CD4-positive, alpha-beta memory T cell (primary cell): ENCODE measurements at regions of chr2 and their contacts with region 1.

Region 1: DNA sequence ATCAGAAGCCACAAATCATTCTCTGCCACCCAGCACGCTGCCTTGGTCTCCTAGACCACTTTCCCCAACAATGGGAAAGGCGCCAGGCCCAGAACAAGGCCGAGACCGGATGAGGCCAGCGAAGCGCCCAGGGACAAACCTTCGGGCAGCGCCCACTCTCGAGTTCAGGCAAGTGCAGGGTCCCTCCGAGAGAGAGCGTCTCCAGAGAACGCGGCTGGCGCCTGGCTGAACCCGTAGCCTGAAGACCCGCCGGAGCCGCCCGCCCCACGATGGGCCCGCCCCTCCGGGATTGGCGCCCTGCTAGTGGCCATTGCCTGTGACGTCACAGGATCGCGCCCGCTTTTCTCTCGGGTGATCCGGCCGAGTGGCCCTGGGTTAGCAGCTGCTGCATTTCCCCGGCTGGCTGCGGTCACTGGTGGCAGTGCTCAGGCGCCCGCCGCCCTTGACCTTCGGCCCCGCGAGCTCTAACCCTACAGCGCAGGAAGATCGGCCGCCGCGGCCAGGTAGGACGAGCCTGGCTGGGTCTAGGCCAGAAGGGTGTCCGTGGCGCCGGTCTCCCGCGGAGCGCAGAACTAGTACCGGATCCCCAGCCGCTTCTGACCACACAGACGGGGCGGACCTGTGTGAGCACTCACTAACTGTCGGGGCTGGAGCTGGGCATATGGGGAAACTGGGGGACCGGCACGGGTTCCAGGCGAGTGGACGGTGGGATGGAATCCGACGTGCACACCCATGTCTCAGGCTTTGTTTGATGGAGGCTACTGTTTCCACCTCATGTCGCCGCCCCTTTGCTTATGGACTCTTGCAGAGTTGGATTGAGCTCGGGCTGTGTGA is at the start of gene FAHD2A:
- DNase-seq: peak; percentile 89 to 93 (median 91)
- H3K4me3 ChIP-seq: peak within 1 kb of the TSS; percentile 93
- H3K4me3 Mint-ChIP-seq: peak within 1 kb of the TSS; percentile 97 to 99 (median 98)
- H3K27ac ChIP-seq: peak within 1 kb of the TSS; percentile 79
- H3K27ac Mint-ChIP-seq: peak within 1 kb of the TSS; percentile 90 to 97 (median 95)
- H3K4me1 ChIP-seq: peaks cover 17% of the 10 kb centered on the region
- H3K4me1 Mint-ChIP-seq: peaks cover 7 to 33% (median 20%) of the 10 kb centered on the region in 4 donors
- H3K27me3 ChIP-seq: no peaks in the 10 kb centered on the region
- H3K27me3 Mint-ChIP-seq: no peaks in the 10 kb centered on the region
- total RNA-seq, gene FAHD2A: 30.7 to 33.9 TPM

Region 2: DNA sequence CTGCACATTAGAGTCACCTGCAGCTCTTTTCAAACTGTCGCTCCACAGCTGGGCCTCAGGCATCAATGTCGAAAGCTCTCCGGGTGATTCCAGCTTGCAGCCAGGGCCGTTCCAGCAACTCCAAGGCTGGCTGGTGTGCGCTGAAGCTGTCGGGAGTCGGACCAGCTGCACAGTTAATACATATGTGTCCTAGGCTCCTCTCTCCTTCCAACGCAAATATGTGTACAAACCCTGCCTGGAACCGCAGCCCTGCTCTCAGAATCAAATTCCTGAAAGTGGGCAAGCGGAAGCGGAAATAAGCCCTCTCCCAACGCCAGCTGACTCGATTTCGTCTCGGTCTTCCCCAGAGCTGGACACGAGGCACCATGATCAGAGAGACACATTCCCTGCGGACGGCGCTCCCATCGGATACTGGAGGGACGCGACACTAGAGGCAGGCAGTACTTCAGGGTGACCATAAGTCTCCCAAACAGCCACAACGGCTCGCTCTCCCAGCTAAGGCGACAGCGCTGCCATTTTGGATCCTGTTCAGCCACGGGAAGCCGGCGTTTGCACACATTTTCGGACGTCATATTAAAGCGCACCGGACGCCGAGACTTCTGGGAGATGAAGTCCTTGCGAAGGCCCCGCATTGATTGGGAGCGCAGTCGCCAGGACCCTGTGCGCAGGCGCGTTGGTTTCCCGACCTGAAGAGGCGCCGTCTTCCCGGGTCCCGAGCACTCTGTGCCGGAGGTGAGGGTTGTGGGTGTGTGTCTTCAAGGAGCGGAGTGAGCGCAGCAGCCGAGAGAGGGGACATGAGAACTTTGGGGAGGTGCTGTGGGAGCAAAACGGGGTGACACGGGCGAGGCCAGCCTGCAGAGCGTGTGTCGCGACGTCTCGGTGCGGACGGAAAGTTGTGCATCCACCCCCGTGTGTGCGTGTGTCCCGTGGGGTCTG is 237.2 kb before region 1 on chr2 and contains the start of gene ZNF2:
- CTCF ChIA-PET with region 1: interaction called, 3 read pairs
- POLR2A ChIA-PET with region 1: interaction called, 4 read pairs
- intact Hi-C with region 1: loop called (anchors 1 kb)
- DNase-seq: peak; percentile 95 to 98 (median 96)
- H3K4me3 ChIP-seq: peak within 1 kb of the TSS; percentile 88 to 97
- H3K4me3 Mint-ChIP-seq: peak within 1 kb of the TSS; percentile 95 to 100 (median 100)
- H3K27ac ChIP-seq: peak within 1 kb of the TSS; percentile 89
- H3K27ac Mint-ChIP-seq: peak within 1 kb of the TSS; percentile 94 to 99 (median 98)
- H3K4me1 ChIP-seq: peaks cover 21% of the 10 kb centered on the region
- H3K4me1 Mint-ChIP-seq: peaks cover 24 to 40% (median 35%) of the 10 kb centered on the region in 4 donors
- H3K27me3 ChIP-seq: no peaks in the 10 kb centered on the region
- H3K27me3 Mint-ChIP-seq: no peaks in the 10 kb centered on the region
- total RNA-seq, gene ZNF2: 8.3 to 10.1 TPM

Region 3: GRCh38 chr2:95296880-95297487 is 105.6 kb before region 1 on chr2 and contains the start of gene KCNIP3:
- CTCF ChIA-PET with region 1: no interaction called
- POLR2A ChIA-PET with region 1: no interaction called
- intact Hi-C with region 1: no loop called
- DNase-seq: no peak
- H3K4me3 ChIP-seq: no peak within 1 kb of the TSS
- H3K4me3 Mint-ChIP-seq: no peak within 1 kb of the TSS
- H3K27ac ChIP-seq: no peak within 1 kb of the TSS
- H3K27ac Mint-ChIP-seq: no peak within 1 kb of the TSS
- H3K4me1 ChIP-seq: no peaks in the 10 kb centered on the region
- H3K4me1 Mint-ChIP-seq: no peaks in the 10 kb centered on the region
- H3K27me3 ChIP-seq: no peaks in the 10 kb centered on the region
- H3K27me3 Mint-ChIP-seq: peaks cover 0 to 2% of the 10 kb centered on the region in 2 donors
- total RNA-seq, gene KCNIP3: not detected

Region 4: DNA sequence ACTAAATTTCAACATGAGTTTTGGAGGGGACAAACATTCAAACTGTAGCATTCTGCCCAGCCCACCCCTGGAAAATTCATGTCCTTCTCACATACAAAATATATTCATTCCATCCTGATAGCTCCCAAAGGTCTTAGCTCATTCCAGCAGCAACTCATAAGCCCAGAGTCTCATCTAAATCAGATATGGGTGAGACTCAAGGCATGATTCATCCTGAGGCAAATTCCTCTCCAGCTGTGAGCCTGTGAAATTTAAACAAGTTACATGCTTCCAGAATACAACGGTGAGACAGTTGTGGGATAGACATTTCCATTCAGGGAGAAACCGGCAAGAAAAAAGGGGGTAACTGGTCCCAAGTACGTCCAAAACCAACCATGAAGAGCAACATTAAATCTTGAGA is 43.6 kb before region 1 on chr2:
- CTCF ChIA-PET with region 1: no interaction called
- POLR2A ChIA-PET with region 1: no interaction called
- intact Hi-C with region 1: no loop called
- DNase-seq: no peak
- H3K4me3 ChIP-seq: no peak overlapping the region
- H3K4me3 Mint-ChIP-seq: no peak overlapping the region
- H3K27ac ChIP-seq: no peak overlapping the region
- H3K27ac Mint-ChIP-seq: no peak overlapping the region
- H3K4me1 ChIP-seq: no peaks in the 10 kb centered on the region
- H3K4me1 Mint-ChIP-seq: no peaks in the 10 kb centered on the region
- H3K27me3 ChIP-seq: no peaks in the 10 kb centered on the region
- H3K27me3 Mint-ChIP-seq: peaks cover 3 to 4% of the 10 kb centered on the region in 2 donors

Region 5: GRCh38 chr2:95389245-95390119 is 13.1 kb before region 1 on chr2:
- CTCF ChIA-PET with region 1: interaction called, 21 read pairs
- POLR2A ChIA-PET with region 1: interaction called, 4 read pairs
- intact Hi-C with region 1: no loop called
- DNase-seq: peak in 3 of 5 donors; percentile 12 to 19 (median 19)
- H3K4me3 ChIP-seq: no peak overlapping the region
- H3K4me3 Mint-ChIP-seq: no peak overlapping the region
- H3K27ac ChIP-seq: no peak overlapping the region
- H3K27ac Mint-ChIP-seq: no peak overlapping the region
- H3K4me1 ChIP-seq: no peaks in the 10 kb centered on the region
- H3K4me1 Mint-ChIP-seq: peaks cover 0 to 5% (median 0%) of the 10 kb centered on the region in 4 donors
- H3K27me3 ChIP-seq: no peaks in the 10 kb centered on the region
- H3K27me3 Mint-ChIP-seq: peaks cover 2 to 5% of the 10 kb centered on the region in 2 donors